ENCODE measurements at regions of chr13 and their contacts with region 1.

Region 1: GRCh38 chr13:33228648-33229445 is 56.7 kb downstream of the STARD13 start:
- DNase-seq: no peak
- H3K4me3 ChIP-seq: peak overlapping the region; percentile 16
- H3K27ac ChIP-seq: peak overlapping the region; percentile 84
- H3K4me1 ChIP-seq: peaks cover 87% of the 10 kb centered on the region
- H3K27me3 ChIP-seq: no peaks in the 10 kb centered on the region
- CTCF ChIP-seq: peak; percentile 91

Region 2: DNA sequence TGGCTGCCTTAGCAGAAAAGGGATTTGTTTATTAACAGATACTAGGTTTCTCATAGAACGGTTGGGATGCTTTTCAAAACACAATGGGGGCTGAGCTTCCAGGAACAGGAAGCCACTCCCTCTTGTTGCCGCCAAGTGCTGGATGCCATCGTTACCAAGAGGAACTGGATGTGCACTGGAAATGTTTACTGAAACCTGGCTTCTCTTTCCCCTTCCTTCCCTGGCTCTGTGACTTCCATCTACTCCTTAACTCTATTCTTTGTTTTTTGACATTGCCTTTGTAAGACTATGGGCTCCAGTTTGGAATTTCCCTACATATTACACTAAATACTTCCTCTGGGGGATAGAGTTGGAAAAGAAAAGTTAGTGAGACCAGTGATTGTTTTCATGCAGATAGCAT is 224.3 kb before region 1 on chr13:
- intact Hi-C with region 1: no loop called
- DNase-seq: peak; percentile 58
- H3K4me3 ChIP-seq: peak overlapping the region; percentile 0
- H3K27ac ChIP-seq: peak overlapping the region; percentile 83
- H3K4me1 ChIP-seq: peaks cover 29% of the 10 kb centered on the region
- H3K27me3 ChIP-seq: no peaks in the 10 kb centered on the region
- CTCF ChIP-seq: no peak

Region 3: GRCh38 chr13:33285420-33286124 is 56.7 kb after region 1 on chr13 and contains the start of gene STARD13:
- intact Hi-C with region 1: loop called (anchors 10 kb)
- DNase-seq: peak; percentile 94
- H3K4me3 ChIP-seq: peak within 1 kb of the TSS; percentile 82
- H3K27ac ChIP-seq: peak within 1 kb of the TSS; percentile 96
- H3K4me1 ChIP-seq: peaks cover 78% of the 10 kb centered on the region
- H3K27me3 ChIP-seq: no peaks in the 10 kb centered on the region
- CTCF ChIP-seq: peak; percentile 65
- total RNA-seq, gene STARD13: 29.9 TPM

Region 4: GRCh38 chr13:33537026-33537425 is 308.2 kb after region 1 on chr13:
- intact Hi-C with region 1: loop called (anchors 5 kb)
- DNase-seq: no peak
- H3K4me3 ChIP-seq: no peak overlapping the region
- H3K27ac ChIP-seq: peak overlapping the region; percentile 8
- H3K4me1 ChIP-seq: peaks cover 40% of the 10 kb centered on the region
- H3K27me3 ChIP-seq: no peaks in the 10 kb centered on the region
- CTCF ChIP-seq: no peak

Measured in left ventricle myocardium inferior (tissue), 1 donor.